ENCODE measurements at regions of chr22 and their contacts with region 1.

Region 1: GRCh38 chr22:28051787-28052356 is 132.8 kb upstream of the PITPNB start:
- DNase-seq: peak; percentile 65
- H3K4me3 Mint-ChIP-seq: no peak overlapping the region
- H3K27ac Mint-ChIP-seq: no peak overlapping the region
- H3K4me1 Mint-ChIP-seq: no peaks in the 10 kb centered on the region
- H3K27me3 Mint-ChIP-seq: peaks cover 44% of the 10 kb centered on the region
- CTCF ChIP-seq: peak; percentile 85

Region 2: DNA sequence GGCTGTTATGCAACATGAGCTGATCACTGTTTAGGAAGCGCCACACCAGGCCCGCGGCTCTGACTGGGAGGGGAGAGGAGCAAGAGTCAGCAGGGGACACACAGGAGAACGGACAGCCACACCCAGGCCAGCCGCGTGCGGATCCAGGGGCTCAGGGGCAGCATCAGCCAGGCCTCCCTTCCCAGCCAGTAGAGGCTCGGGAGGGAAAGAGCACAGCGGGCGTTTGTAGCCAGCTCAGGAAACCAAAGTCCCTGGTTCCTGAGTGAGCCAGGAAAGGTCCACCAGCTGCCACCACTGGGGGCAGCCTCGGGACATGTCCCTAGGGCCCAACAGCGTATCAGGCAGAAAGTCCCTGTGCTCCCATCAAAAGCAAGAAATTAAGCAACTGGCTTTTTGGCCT is 61.0 kb before region 1 on chr22:
- CTCF ChIA-PET with region 1: no interaction called
- POLR2A ChIA-PET with region 1: no interaction called
- intact Hi-C with region 1: no loop called
- DNase-seq: peak; percentile 14
- H3K4me3 Mint-ChIP-seq: no peak overlapping the region
- H3K27ac Mint-ChIP-seq: no peak overlapping the region
- H3K4me1 Mint-ChIP-seq: no peaks in the 10 kb centered on the region
- H3K27me3 Mint-ChIP-seq: no peaks in the 10 kb centered on the region
- CTCF ChIP-seq: peak; percentile 29

Region 3: DNA sequence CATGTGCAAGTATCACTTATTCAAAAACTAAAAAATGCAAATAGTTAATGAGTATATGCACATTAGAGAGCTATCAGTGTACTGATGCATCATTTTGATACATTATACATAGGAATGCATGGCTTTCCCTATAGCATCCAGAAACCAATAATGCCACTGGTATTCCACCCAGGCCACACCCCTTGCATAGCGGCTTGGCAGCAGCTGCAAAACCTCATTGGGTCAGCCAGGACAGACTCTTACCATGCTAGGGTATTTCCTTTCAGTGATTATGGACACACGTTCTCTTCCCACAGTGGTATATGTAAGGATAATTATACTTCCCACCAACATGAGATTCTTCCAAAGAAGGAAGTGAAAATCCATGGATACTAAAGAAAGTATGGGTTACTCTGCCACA is 13.0 kb after region 1 on chr22:
- CTCF ChIA-PET with region 1: interaction called, 29 read pairs
- POLR2A ChIA-PET with region 1: no interaction called
- intact Hi-C with region 1: no loop called
- DNase-seq: no peak
- H3K4me3 Mint-ChIP-seq: no peak overlapping the region
- H3K27ac Mint-ChIP-seq: no peak overlapping the region
- H3K4me1 Mint-ChIP-seq: no peaks in the 10 kb centered on the region
- H3K27me3 Mint-ChIP-seq: peaks cover 69% of the 10 kb centered on the region
- CTCF ChIP-seq: no peak

Region 4: DNA sequence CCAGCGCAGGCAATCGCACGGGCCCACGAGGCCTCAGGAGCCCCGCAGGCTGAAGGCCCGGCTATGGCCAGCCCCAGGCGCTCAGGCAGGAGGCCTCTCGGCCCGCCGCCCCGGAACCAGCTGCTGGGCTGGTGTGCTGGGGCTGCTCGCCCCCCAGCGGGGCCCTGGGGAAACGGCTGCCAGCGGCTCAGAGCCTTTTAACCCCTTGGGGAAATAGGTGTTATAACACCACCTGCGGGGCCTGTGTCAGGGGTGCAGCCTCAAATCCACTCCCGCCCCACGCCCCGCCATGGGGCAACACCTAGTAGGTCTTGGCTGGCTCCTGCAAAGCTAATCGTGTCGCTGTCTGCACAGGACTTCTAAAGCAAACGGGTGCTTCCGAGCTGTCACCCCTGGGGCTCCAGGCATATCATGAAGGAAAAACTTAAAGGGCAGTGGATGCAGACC is 390.4 kb after region 1 on chr22:
- CTCF ChIA-PET with region 1: interaction called, 4 read pairs
- POLR2A ChIA-PET with region 1: no interaction called
- intact Hi-C with region 1: loop called (anchors 10 kb)
- DNase-seq: peak; percentile 24
- H3K4me3 Mint-ChIP-seq: no peak overlapping the region
- H3K27ac Mint-ChIP-seq: no peak overlapping the region
- H3K4me1 Mint-ChIP-seq: no peaks in the 10 kb centered on the region
- H3K27me3 Mint-ChIP-seq: peaks cover 52% of the 10 kb centered on the region
- CTCF ChIP-seq: peak; percentile 35

Region 5: DNA sequence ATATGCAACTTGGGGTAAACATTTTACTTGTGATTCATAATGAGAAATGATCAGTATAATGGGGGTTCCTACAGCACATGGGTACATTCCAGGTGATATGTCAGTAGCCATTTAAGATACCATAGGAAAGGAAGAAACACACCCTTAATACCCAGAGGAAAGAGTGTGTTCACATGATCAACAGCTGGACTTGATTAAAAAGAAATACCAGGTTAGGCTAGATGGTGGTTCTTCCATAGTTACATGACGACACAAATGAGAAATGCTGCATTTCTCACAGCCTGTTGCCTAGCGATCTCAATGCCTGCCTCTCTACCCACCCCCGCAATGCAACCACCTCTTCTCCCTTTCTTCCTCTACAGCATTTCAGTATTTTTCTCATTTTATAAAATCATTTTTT is 530.9 kb after region 1 on chr22:
- CTCF ChIA-PET with region 1: interaction called, 11 read pairs
- POLR2A ChIA-PET with region 1: no interaction called
- intact Hi-C with region 1: no loop called
- DNase-seq: peak; percentile 11
- H3K4me3 Mint-ChIP-seq: no peak overlapping the region
- H3K27ac Mint-ChIP-seq: no peak overlapping the region
- H3K4me1 Mint-ChIP-seq: no peaks in the 10 kb centered on the region
- H3K27me3 Mint-ChIP-seq: peaks cover 61% of the 10 kb centered on the region
- CTCF ChIP-seq: no peak

Region 6: DNA sequence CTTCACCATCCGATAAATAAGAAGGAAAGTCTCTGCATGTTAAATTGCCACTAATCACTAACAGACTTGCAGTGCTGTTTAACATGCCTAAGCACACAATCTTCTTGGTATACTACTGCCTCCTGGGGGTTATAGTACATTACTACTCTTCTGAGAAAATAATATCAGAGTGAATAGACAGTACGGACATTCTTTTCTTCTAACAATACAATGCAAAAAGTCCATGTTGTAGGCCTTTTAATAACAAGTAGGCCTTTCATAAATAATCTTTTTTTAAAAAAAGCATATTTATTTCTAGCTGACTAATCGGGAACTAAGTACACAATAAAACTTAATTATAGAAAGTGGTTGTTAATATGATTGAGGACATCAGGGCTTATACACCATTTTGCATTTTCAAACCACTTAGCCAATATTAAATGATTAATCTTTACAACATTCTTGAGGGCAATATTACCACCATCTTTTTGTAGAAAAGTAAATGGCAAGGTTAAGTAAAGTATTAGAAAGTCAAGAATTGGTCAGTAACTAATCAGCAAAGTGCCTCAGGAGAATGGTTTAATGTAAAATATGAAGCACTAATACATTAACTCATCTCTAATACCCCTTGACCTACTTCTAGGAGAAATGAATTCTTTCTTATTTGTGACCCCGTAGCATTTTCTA is 543.1 kb after region 1 on chr22:
- CTCF ChIA-PET with region 1: interaction called, 139 read pairs
- POLR2A ChIA-PET with region 1: interaction called, 5 read pairs
- intact Hi-C with region 1: loop called (anchors 1 kb)
- DNase-seq: peak; percentile 68
- H3K4me3 Mint-ChIP-seq: no peak overlapping the region
- H3K27ac Mint-ChIP-seq: no peak overlapping the region
- H3K4me1 Mint-ChIP-seq: no peaks in the 10 kb centered on the region
- H3K27me3 Mint-ChIP-seq: peaks cover 48% of the 10 kb centered on the region
- CTCF ChIP-seq: peak; percentile 61

Region 7: DNA sequence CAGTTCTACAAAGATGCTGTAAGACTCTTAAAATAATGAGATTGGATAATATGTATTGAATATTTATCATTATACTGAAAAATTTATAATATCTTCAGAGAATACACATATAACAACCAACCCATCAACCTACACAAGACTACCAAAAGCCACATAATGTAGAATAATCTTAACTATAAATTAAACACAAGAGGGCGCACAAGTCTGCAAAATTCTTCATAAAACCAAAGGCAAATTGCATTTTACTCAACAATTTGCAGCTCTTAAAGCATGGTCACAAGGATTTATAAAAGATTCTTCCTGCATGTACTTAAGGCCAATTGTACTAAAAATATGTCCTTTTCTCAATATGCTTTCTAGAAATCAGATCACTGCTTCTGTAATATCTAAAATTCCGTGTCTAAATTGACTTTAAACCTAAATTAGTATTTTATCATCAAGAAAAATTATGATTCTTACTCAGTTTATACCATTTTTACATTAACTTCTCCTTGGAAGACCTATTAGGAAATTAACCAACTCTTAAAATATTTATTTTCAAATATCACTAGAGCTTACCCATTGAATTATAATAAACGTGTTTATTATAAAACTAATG is 548.8 kb after region 1 on chr22:
- CTCF ChIA-PET with region 1: interaction called, 139 read pairs
- POLR2A ChIA-PET with region 1: no interaction called
- intact Hi-C with region 1: no loop called
- DNase-seq: peak; percentile 56
- H3K4me3 Mint-ChIP-seq: no peak overlapping the region
- H3K27ac Mint-ChIP-seq: no peak overlapping the region
- H3K4me1 Mint-ChIP-seq: no peaks in the 10 kb centered on the region
- H3K27me3 Mint-ChIP-seq: peaks cover 21% of the 10 kb centered on the region
- CTCF ChIP-seq: peak; percentile 41

Measured in MCF 10A (cell line).